Gastrocnemius medialis (tissue), 4 donors: ENCODE measurements at regions of chr15 and their contacts with region 1.

Region 1: DNA sequence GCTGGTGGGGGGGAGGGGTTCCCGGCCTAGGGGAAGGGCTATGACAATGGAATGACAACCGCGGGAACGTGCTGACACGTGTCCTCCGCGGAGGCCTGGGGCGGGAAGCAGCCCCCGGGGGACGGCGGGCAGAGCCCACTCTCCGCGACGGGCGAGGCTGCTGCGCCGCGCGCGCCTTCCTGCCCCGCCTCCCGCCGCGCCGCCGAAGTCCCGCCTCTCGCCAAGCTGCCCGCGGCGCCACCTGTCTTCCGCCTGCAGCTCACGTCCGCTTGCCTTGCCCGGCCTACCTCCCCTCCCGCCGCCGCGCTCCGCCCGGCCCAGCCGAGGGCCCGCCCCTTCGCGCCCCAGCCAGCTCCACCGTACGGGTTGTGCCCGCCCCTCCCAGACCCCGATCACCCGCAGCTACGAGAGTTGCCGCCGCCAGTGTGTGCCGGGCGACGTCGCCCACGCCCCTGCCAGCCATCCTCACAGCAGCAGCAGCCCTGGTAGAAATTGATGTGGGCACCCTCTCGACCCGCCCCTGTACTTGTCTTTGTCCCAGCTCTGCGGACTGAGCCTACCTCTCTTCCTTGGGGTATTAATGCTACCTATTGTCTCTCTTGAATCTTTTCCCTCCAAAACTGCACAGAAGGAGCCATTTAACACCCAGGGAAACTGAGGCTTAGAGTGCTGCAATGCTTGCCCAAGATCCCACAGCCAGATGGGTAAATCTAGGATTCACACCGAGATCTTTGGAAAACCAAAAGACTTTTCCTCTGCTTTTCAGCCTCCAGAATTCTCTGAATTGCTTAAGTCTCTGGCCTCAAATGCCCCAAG is at the start of gene PARP16:
- DNase-seq: peak; percentile 89 to 92
- ATAC-seq: peak; percentile 90
- H3K4me3 ChIP-seq: peak within 1 kb of the TSS; percentile 74 to 91 (median 87)
- H3K27ac ChIP-seq: peak within 1 kb of the TSS; percentile 96 to 99 (median 98)
- H3K4me1 ChIP-seq: peaks cover 9 to 11% of the 10 kb centered on the region in 2 donors
- H3K27me3 ChIP-seq: no peaks in the 10 kb centered on the region
- CTCF ChIP-seq: peak in 4 of 5 experiments; percentile 43 to 83 (median 71)
- POLR2A ChIP-seq: peak; percentile 85 to 92
- total RNA-seq, gene PARP16: 2.6 to 3.3 (median 3.0) TPM

Region 2: DNA sequence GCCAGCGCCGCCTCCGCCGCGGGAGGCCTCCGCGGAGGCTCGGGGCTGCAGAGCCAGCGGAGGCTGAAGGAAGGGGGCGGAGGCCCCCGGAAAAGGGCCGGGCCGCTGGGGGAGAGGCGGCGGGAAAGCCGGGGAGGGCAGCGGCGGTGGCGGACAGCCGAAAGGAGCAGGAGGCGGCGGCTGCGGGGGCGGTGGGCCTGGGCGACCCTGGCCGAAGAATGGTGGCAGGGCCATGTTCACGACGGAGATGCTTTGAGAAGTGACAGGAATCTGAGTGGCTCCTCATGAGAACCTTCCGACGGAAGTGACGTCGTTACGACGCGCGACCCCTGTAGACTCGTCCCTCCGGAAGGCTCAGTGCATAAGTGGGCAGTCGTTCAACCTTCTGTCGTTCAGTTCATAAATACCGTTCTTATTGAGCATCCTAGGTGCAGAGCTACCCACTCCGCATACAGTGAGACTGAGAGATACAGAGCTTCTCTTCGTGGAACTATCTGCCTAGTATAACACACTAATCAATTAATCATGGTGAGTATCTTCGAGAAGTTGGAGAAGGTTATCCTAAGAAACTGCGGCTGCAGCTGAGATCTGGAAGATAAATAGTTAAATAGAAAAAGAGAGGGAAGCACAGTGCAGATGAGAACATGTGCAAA is 153.2 kb before region 1 on chr15 and contains the start of gene PDCD7:
- in situ Hi-C with region 1: no loop called
- intact Hi-C with region 1: loop called (anchors 5 kb)
- DNase-seq: peak; percentile 75 to 81
- ATAC-seq: peak; percentile 97 to 99
- H3K4me3 ChIP-seq: peak within 1 kb of the TSS; percentile 69 to 93 (median 78)
- H3K27ac ChIP-seq: peak within 1 kb of the TSS; percentile 71 to 89 (median 88)
- H3K4me1 ChIP-seq: peaks cover 18 to 30% of the 10 kb centered on the region in 2 donors
- H3K27me3 ChIP-seq: no peaks in the 10 kb centered on the region
- CTCF ChIP-seq: no peak
- POLR2A ChIP-seq: peak; percentile 69 to 72
- total RNA-seq, gene PDCD7: 10.4 to 15.7 (median 12.4) TPM

Region 3: DNA sequence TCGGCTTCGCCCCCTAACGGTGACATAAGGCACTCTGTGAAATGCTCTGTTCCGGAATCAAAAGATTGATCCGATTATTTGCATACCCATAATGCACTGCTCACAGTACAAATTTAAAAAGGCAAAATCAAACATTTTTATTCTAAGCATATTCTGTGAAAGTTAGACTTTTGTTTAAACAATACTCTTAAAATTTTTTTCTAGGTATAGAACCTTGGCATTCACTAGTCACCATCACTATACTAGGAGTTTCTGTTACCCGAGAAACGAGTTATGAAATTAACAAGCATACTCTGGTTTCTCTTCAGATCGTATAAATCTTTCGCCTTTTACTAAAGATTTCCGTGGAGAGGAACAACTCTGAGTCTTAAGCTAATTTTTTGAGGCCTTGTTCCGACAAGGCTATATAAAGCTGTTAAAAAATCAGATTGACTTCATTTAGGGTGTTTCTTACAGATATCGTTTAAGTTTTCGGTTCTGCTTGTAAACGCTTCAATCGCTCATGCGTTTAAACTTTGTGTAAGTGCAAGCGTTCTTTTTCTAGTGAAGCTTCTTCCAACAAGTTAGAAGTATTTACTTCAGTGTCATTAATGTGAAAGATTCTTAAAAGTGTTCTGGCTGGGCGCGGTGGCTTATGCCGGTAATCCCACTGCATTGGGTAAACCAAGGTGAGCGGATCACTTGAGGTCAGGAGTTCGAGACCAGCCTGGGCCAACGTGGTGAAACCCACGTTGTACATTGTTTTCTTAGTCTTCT is 17.7 kb after region 1 on chr15 and contains the start of gene RNU5B-1:
- in situ Hi-C with region 1: no loop called
- intact Hi-C with region 1: loop called (anchors 1 kb)
- DNase-seq: peak; percentile 61 to 72
- ATAC-seq: peak; percentile 90 to 91
- H3K4me3 ChIP-seq: peak within 1 kb of the TSS; percentile 64 to 70 (median 67)
- H3K27ac ChIP-seq: peak within 1 kb of the TSS; percentile 87 to 95 (median 91)
- H3K4me1 ChIP-seq: peaks cover 7 to 8% of the 10 kb centered on the region in 2 donors
- H3K27me3 ChIP-seq: no peaks in the 10 kb centered on the region
- CTCF ChIP-seq: peak; percentile 75 to 90 (median 85)
- POLR2A ChIP-seq: peak; percentile 97 to 99
- total RNA-seq, gene RNU5B-1: not detected

Region 4: DNA sequence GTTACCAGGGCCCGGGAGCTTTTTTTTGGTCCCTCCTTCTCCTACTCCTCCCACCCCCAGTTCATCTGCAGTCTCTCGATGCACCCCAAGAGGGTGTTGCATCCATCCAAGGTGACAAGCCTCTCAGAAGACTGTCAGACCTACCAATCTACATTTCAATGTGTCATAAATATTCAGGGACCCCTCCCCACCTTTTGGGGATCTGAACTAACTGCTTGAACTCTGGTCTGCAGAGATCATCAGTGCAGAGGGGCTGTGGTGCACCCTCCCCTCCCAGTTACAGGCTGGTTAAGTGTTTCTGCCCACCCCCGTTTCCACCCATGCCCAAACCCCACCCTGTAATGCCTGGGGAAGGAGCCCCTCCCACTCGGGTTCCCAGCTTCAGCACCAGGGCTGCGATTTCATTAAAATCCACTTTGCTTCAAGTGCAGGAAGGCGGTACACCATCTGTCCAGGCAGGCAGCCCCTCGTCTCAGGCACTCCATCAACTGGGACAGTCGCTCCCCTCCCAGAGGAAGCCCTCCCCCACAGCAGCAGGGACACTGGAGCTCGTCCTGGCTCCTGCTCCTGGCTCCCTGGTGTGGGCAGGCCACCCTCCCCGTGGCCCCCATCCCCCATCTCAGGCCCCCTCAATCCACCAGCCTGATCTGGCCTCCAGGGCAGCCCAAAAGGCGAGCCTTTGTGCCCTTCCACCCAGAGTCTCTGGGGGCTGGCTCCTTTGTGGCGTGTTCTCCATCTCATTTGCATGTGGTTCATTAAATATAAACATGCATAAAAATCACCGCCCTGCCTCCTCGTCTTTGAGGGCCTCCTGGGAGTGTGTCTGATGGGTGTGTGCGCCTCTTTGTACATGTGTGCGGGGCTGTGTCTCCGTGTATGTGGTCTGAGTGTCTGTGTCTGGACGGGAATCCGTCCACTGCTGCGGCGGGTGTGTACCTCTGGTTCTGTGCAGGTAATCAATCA is 49.9 kb after region 1 on chr15:
- in situ Hi-C with region 1: no loop called
- intact Hi-C with region 1: no loop called
- DNase-seq: no peak
- ATAC-seq: no peak
- H3K4me3 ChIP-seq: no peak overlapping the region
- H3K27ac ChIP-seq: no peak overlapping the region
- H3K4me1 ChIP-seq: no peaks in the 10 kb centered on the region
- H3K27me3 ChIP-seq: no peaks in the 10 kb centered on the region
- CTCF ChIP-seq: no peak
- POLR2A ChIP-seq: no peak